Activated T-helper 1 cell treated with anti-CD3 and anti-CD28 coated beads, Interleukin-12 subunit alpha, Interleukin-12 subunit beta, Interleukin-2, Interleukin-4 antibody, amounts not matched to agents 30 ng/mL and 10 ng/mL and 1 ng/mL, durations not matched to agents 14 hours and 24 hours and 36 hours (primary cell): ENCODE measurements at regions of chr14 and their contacts with region 1.

Region 1: GRCh38 chr14:70887207-70887681 is 20.0 kb upstream of the PCNX1 start:
- DNase-seq: no peak
- H3K4me3 Mint-ChIP-seq: peak overlapping the region; percentile 73
- H3K27ac Mint-ChIP-seq: peak overlapping the region; percentile 88
- H3K4me1 Mint-ChIP-seq: peaks cover 98% of the 10 kb centered on the region
- H3K27me3 Mint-ChIP-seq: no peaks in the 10 kb centered on the region

Region 2: GRCh38 chr14:69675877-69676416 is 1211.3 kb before region 1 on chr14:
- intact Hi-C with region 1: loop called (anchors 1 kb)
- DNase-seq: peak; percentile 54
- H3K4me3 Mint-ChIP-seq: peak overlapping the region; percentile 68
- H3K27ac Mint-ChIP-seq: peak overlapping the region; percentile 98
- H3K4me1 Mint-ChIP-seq: peaks cover 78% of the 10 kb centered on the region
- H3K27me3 Mint-ChIP-seq: no peaks in the 10 kb centered on the region

Region 3: DNA sequence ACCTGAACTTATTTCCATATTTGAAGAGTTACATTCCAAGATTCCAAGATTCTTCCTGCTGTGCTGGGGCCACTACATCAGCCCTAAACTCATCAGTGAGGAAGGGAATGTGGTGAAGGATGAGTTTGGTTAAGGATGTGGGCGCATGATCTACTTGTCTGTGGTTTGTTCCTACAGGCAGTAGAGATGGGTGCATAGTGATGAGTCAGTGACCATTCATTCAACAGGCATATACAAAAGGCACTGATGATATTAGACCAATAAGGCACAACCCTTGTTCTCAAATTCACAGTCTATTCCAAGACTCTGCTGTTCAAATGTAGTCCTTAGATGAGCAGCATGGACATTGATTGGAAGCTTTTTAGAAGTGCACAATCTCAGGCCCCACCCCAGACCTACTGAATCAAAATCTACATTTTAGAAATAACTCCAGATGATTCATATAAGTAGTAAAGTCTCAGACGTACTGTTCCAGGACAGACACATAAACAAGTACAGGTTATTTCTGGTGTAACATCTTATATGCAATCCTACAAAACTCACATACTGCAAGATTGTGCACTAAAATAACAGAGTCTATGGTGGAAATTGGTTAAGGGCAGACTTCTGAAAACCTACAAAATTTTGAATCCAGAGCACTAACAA is 30.3 kb before region 1 on chr14:
- intact Hi-C with region 1: loop called (anchors 1 kb)
- DNase-seq: peak; percentile 3
- H3K4me3 Mint-ChIP-seq: no peak overlapping the region
- H3K27ac Mint-ChIP-seq: peak overlapping the region; percentile 31
- H3K4me1 Mint-ChIP-seq: peaks cover 15% of the 10 kb centered on the region
- H3K27me3 Mint-ChIP-seq: peaks cover 2% of the 10 kb centered on the region

Region 4: DNA sequence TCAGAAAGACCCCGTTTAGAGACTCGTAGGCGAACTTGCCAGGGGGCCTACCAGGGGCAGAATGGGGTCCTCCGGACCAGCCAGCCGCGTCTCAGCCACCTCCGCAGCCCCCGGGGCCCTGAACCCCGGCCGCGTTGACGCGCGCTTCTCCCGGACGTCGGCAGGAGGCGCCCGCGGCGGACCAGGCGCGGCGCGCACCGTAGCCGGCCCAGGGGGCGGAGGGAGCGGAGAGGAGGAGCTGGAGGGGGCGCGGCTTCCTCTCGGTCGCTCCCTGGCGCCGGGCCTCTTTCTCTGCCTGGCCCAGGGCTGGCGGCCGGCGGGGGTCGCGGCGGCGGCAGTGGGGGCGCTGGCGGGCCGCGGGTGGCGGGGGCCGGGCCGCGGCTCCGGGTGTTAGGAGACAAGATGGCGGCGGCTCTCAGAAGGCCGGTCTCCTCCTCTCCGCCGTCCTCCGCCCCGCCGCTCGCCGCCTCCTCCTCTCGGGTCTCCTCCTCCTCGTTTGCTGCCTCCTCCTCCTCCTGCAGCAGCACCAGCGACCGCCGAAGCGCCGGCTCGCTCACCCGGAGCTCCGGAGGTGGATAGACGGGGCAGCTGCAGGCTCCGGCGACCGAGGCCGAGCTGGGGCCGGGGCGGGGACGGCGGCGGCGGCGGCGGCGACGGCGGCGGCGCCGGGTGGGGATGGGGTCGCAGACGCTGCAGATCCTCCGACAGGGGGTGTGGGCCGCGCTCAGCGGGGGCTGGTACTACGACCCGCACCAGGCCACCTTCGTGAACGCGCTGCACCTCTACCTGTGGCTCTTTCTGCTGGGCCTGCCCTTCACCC is 20.1 kb after region 1 on chr14 and contains the start of gene PCNX1:
- intact Hi-C with region 1: loop called (anchors 1 kb)
- DNase-seq: peak; percentile 84
- H3K4me3 Mint-ChIP-seq: peak within 1 kb of the TSS; percentile 86
- H3K27ac Mint-ChIP-seq: peak within 1 kb of the TSS; percentile 94
- H3K4me1 Mint-ChIP-seq: peaks cover 59% of the 10 kb centered on the region
- H3K27me3 Mint-ChIP-seq: peaks cover 2% of the 10 kb centered on the region
- total RNA-seq, gene PCNX1: 37.9 and 42.7 TPM in 2 replicates

Region 5: DNA sequence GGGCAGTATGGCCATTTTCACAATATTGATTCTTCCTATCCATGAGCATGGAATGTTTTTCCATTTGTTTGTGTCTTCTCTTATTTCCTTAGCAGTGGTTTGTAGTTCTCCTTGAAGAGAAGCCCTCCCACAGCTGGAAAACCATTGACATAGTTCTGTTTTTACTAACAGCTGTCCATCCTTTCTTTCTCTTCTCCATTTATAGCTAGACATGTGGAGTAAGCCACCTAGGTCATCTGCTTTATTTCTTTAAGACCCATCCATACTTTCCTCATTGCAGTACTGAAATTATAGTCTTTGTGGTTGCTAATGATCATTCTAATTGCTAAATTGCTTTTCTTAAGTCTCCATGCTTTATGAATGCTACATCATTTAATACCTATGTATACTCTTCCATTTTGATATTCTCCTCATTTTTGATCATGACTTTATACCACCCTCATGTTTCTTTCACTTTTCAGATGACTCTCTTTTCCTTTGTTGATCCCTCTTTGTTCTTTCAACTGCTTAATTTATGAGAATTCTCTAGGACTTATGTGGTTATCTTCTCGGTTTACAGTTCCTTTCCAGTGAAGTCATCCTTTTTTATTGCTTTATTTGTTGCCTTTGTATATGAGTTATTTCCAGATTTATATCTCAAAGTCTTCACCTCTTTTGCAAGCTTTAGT is 134.2 kb after region 1 on chr14:
- intact Hi-C with region 1: loop called (anchors 5 kb)
- DNase-seq: no peak
- H3K4me3 Mint-ChIP-seq: no peak overlapping the region
- H3K27ac Mint-ChIP-seq: peak overlapping the region; percentile 80
- H3K4me1 Mint-ChIP-seq: peaks cover 33% of the 10 kb centered on the region
- H3K27me3 Mint-ChIP-seq: no peaks in the 10 kb centered on the region

Region 6: GRCh38 chr14:71242237-71242748 is 355.0 kb after region 1 on chr14:
- intact Hi-C with region 1: no loop called
- DNase-seq: no peak
- H3K4me3 Mint-ChIP-seq: no peak overlapping the region
- H3K27ac Mint-ChIP-seq: no peak overlapping the region
- H3K4me1 Mint-ChIP-seq: peaks cover 44% of the 10 kb centered on the region
- H3K27me3 Mint-ChIP-seq: peaks cover 9% of the 10 kb centered on the region

Region 7: DNA sequence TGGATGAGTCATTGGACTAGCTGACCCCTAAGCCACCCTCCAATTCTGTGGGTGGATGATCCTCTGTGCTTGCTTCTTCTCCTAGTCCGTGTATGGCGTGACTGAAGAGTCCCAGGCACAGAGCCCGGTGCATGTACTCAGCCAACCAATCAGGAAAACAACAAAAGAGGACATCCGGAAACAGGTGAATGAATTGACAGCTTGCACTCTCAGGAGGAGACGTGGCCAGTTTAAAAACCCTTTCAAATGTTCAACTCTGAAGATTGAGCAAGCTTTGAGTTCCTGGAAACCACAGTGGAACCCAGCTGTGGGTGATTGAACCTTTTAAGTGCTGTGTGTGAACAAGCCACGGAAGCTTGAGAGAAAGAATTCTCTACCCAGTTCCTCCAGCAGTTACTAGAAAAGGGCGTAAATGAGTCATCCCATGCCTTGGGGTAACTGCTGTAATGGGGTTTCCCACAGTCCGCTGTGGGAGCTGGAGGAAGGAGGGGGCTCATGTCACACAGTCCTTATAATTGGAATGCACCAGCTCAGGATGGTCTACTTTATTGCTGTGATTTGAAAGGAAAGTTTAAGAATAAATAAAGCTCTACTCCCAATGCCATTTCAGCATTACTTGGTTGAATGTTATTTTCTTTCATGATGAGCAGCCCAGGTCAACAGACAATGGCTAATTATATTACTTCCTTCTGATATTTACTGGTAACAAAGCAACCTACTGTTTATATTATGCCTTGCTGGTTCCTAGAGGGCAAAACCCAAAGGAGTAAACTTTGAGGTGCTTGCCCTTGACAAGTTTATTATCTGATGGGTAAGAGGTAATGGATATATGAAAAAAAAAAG is 1589.6 kb after region 1 on chr14:
- intact Hi-C with region 1: loop called (anchors 2 kb)
- DNase-seq: peak; percentile 81
- H3K4me3 Mint-ChIP-seq: peak overlapping the region; percentile 53
- H3K27ac Mint-ChIP-seq: peak overlapping the region; percentile 87
- H3K4me1 Mint-ChIP-seq: peaks cover 80% of the 10 kb centered on the region
- H3K27me3 Mint-ChIP-seq: no peaks in the 10 kb centered on the region